Activated naive CD4-positive, alpha-beta T cell treated with anti-CD3 and anti-CD28 coated beads for 36 hours (primary cell): ENCODE measurements at regions of chr1 and their contacts with region 1.

Region 1: DNA sequence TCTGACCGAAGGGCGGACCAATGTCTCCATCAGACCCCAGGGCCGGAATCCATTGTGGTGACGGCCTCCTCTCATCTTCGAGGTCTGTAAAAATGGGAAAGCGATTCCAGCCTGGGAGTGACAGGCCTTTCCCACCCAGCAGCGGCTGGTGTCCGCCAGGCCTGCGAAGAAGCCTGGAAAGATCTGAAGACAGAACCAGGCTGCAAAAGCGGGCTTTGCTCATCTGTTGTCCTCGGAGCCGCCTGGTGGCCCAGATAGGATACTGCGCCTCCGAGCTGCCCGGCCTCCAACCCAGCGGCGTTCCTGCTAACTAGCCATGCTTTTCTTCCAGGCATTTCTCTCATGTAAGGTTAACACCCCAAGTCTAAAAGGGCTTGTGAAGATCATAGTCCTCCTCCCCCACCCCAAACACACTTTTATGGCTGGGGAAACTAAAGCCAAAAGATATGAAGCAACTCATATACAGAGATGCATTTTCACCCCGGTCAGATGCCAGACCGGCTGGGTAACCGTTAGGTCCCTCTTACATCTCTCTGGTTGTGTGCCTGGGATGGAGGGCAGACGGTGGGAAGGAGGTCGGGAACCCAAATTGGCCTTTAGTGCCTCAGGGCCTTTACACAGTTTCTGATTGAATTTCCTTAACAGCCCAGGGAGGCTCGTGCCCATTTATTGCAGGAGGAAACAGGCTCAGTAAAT is 1.9 kb upstream of the DHRS3 start:
- DNase-seq: peak; percentile 87
- H3K4me3 Mint-ChIP-seq: peak overlapping the region; percentile 97
- H3K27ac Mint-ChIP-seq: peak overlapping the region; percentile 68
- H3K4me1 Mint-ChIP-seq: peaks cover 35% of the 10 kb centered on the region
- H3K27me3 Mint-ChIP-seq: no peaks in the 10 kb centered on the region

Region 2: GRCh38 chr1:11907275-11908094 is 712.5 kb before region 1 on chr1:
- CTCF ChIA-PET with region 1: no interaction called
- intact Hi-C with region 1: loop called (anchors 5 kb)
- DNase-seq: peak; percentile 96
- H3K4me3 Mint-ChIP-seq: peak overlapping the region; percentile 96
- H3K27ac Mint-ChIP-seq: peak overlapping the region; percentile 97
- H3K4me1 Mint-ChIP-seq: peaks cover 35% of the 10 kb centered on the region
- H3K27me3 Mint-ChIP-seq: peaks cover 6% of the 10 kb centered on the region

Region 3: GRCh38 chr1:12177999-12178441 is 441.9 kb before region 1 on chr1:
- CTCF ChIA-PET with region 1: no interaction called
- intact Hi-C with region 1: loop called (anchors 5 kb)
- DNase-seq: peak; percentile 96
- H3K4me3 Mint-ChIP-seq: peak overlapping the region; percentile 69
- H3K27ac Mint-ChIP-seq: peak overlapping the region; percentile 90
- H3K4me1 Mint-ChIP-seq: peaks cover 88% of the 10 kb centered on the region
- H3K27me3 Mint-ChIP-seq: no peaks in the 10 kb centered on the region

Region 4: DNA sequence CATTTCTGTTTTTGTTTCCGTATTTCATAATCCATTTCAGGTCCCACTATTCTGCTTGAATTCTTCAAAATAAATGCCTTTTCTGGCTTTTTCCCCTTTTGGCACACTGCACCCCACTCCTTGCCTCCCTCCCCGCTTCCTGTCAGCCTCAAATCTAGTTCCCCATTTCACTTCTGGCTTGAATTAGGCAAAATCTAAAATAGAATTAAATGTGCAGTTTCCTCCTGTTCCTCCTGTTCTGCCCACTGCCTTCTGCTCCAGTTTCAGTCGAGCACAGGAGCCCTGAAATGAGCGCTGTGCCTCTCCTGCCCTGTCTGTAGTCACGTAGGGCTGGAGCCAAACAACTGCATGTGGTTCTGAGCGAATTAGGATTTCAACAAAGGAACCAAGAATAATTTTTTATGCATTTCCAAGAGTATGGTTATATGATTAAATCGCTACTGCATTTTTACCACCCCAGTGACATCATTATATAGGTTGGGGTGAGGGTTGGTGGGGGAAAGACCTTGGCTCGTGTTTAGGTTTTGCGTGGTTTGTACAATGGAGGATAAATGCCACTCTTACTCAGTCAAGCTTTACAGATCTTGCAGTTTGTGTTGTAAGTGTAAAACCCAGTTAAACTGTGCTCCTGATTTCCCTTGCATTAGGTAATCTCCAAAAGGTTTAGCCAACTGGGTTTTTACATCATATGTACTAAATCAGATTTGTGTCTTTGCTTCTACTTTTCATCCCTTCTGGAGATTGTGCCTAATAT is 275.2 kb before region 1 on chr1:
- CTCF ChIA-PET with region 1: interaction called, 9 read pairs
- intact Hi-C with region 1: loop called (anchors 1 kb)
- DNase-seq: peak; percentile 59
- H3K4me3 Mint-ChIP-seq: peak overlapping the region; percentile 51
- H3K27ac Mint-ChIP-seq: peak overlapping the region; percentile 82
- H3K4me1 Mint-ChIP-seq: peaks cover 61% of the 10 kb centered on the region
- H3K27me3 Mint-ChIP-seq: no peaks in the 10 kb centered on the region

Region 5: GRCh38 chr1:12448746-12449177 is 171.2 kb before region 1 on chr1:
- CTCF ChIA-PET with region 1: no interaction called
- intact Hi-C with region 1: loop called (anchors 1 kb)
- DNase-seq: no peak
- H3K4me3 Mint-ChIP-seq: no peak overlapping the region
- H3K27ac Mint-ChIP-seq: peak overlapping the region; percentile 68
- H3K4me1 Mint-ChIP-seq: peaks cover 75% of the 10 kb centered on the region
- H3K27me3 Mint-ChIP-seq: no peaks in the 10 kb centered on the region

Region 6: DNA sequence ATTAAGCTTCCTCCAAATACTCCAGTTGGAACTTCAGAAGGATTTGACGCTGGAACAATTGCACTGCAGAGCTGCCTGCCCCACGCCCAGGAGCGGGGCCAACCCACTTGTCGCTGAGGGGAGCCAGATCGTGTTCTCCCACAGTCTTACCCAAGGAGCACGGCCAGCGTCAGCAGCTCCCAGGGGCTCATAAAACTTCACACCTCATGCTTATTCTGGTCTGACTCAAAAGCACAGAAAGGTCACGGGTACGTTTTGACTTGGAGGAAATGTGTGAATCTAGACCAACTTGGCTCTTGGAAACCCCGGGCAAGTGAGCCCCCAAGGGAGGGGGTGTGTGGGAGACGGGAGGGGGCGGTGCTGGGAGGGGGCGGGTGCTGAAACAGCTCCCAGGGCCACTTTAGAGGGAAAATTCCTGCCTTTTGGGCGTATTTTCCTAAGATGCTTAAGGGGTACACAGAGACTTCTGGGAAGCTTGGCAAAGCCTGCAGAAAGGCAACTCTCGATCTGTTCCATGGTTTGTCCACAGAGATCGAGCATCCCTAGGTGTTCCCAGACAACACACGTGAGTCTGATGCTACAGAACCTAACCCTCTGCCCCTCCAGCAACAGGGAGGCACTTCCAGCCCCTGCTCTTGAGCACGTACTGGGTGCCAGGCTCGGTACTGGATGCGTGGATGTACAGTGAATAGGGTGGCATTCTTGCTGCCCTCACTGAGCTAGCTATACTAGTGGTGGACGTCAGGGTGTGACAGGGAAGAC is 100.8 kb before region 1 on chr1:
- CTCF ChIA-PET with region 1: interaction called, 3 read pairs
- intact Hi-C with region 1: loop called (anchors 1 kb)
- DNase-seq: peak; percentile 84
- H3K4me3 Mint-ChIP-seq: no peak overlapping the region
- H3K27ac Mint-ChIP-seq: peak overlapping the region; percentile 67
- H3K4me1 Mint-ChIP-seq: peaks cover 43% of the 10 kb centered on the region
- H3K27me3 Mint-ChIP-seq: no peaks in the 10 kb centered on the region

Region 7: DNA sequence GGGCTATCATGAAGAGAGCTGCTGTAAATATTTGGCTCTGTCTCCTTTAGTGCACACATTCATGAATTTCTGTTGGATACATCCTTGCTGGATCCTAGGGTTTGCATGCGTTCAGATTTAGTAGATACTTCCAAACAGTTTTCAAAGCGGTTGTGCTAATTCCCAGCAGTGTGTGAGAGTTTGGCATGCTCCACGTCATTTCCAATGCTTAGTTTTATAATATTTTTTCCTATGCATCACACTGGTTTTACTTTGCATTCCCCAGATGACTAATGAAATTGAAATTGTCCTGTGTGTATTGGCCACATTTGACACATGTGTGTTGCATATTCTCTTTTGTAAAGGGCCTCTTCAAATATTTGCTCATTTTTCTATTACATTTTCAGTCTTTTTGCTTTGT is 77.5 kb after region 1 on chr1:
- CTCF ChIA-PET with region 1: no interaction called
- intact Hi-C with region 1: no loop called
- DNase-seq: no peak
- H3K4me3 Mint-ChIP-seq: no peak overlapping the region
- H3K27ac Mint-ChIP-seq: no peak overlapping the region
- H3K4me1 Mint-ChIP-seq: no peaks in the 10 kb centered on the region
- H3K27me3 Mint-ChIP-seq: peaks cover 7% of the 10 kb centered on the region

Region 8: DNA sequence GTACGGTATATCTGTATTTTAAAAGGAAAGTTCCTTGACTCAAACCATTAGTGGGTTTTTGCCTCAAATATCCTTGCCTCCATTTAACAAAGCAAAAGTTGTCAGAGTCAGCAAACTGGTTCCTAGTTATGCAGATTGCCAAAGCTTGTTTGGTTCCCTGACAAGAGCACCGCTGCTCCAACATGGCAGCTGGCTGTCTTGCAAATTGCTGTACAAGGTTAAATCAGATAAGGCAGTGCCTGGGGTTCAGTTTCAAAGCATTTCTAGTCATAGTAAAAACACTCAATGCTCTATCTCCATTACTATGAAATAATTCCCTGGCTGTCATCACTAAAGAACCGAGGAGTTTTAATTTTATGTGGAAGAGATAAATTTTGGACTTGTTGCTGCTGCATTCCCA is 114.7 kb after region 1 on chr1:
- CTCF ChIA-PET with region 1: no interaction called
- intact Hi-C with region 1: no loop called
- DNase-seq: no peak
- H3K4me3 Mint-ChIP-seq: no peak overlapping the region
- H3K27ac Mint-ChIP-seq: no peak overlapping the region
- H3K4me1 Mint-ChIP-seq: no peaks in the 10 kb centered on the region
- H3K27me3 Mint-ChIP-seq: peaks cover 58% of the 10 kb centered on the region

Region 9: GRCh38 chr1:12745992-12746323 is 126.0 kb after region 1 on chr1 and contains the start of gene CFAP107:
- CTCF ChIA-PET with region 1: no interaction called
- intact Hi-C with region 1: no loop called
- DNase-seq: no peak
- H3K4me3 Mint-ChIP-seq: no peak within 1 kb of the TSS
- H3K27ac Mint-ChIP-seq: no peak within 1 kb of the TSS
- H3K4me1 Mint-ChIP-seq: no peaks in the 10 kb centered on the region
- H3K27me3 Mint-ChIP-seq: peaks cover 29% of the 10 kb centered on the region
- total RNA-seq, gene CFAP107: not detected